Panc1 (cell line): ENCODE measurements at regions of chr9 and their contacts with region 1.

Region 1: DNA sequence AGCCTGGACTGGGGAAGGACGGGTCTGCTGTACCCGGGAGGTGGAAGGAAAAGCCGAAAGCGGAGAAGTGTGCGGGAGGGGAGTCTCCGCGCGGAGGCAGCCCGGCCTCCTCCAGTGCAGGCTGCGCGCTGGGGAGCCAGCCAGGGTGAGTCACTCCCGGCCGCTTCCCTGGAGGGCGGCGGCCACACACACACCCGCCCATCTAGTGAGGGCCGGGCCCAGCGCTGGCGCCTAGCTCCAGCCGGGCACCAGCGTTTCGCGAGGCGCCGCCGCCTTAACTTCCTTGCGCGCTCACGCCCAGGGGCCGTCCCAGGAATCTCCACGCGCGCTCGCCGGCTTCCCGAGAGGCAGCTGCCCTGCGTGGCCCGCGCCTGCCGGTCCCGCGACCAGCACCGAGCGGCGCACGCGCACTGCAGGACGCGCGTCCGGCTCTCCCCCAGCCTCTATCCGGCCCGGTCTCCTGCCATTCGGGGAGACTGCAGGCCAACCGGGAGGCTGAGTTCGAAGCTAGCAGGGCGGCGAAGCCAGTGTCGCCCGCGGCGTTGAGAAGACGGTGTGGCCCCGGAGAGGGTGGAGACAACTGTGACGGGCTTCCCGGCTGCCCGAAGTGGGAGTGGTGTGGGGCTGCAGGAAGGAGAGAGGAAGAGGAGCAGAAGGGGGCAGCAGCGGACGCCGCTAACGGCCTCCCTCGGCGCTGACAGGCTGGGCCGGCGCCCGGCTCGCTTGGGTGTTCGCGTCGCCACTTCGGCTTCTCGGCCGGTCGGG is at the start of gene JAK2:
- DNase-seq: no peak
- ATAC-seq: peak; percentile 96
- H3K4me3 ChIP-seq: peak within 1 kb of the TSS; percentile 57 to 60
- H3K27ac ChIP-seq: peak within 1 kb of the TSS; percentile 61
- H3K4me1 ChIP-seq: peaks cover 3% of the 10 kb centered on the region; the same call in 1 of the 2 replicates
- H3K27me3 ChIP-seq: no peaks in the 10 kb centered on the region
- CTCF ChIP-seq: peak; percentile 50
- total RNA-seq, gene JAK2: 2.3 TPM

Region 2: DNA sequence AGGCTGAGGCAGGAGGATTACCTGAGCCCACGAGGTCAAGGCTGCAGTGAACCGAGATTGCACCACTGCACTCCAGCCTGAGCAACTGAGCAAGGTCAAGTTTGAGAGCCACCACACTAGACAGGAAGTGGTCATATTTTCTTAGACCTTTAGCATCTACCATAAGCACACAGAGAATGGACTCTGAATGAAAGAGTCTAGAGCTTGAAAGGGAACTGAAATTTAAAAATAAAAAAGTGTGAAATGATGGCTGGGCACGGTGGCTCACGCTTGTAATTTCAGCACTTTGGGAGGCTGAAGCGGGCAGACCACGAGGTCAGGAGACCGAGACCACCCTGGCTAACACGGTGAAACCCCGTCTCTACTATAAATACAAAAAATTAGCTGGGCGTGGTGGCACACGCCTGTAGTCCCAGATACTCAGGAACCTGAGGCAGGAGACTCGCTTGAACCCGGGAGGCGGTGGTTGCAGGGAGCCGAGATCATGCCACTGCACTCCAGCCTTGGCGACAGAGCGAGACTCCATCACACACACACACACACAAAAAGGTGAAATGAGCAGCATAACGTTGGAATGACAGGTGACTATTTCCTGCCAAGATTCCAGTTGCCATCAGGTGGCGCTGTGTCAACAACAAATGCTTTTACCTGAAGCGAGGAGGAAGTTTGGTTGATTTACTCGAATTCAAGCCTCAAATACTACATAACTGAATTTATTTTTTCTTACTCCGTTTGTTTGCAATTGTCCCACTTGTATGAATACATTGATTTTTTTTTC is 222.5 kb before region 1 on chr9:
- CTCF ChIA-PET with region 1: no interaction called
- POLR2A ChIA-PET with region 1: no interaction called
- in situ Hi-C with region 1: no loop called
- intact Hi-C with region 1: loop called (anchors 5 kb)
- DNase-seq: peak; percentile 32
- ATAC-seq: no peak
- H3K4me3 ChIP-seq: no peak overlapping the region
- H3K27ac ChIP-seq: no peak overlapping the region
- H3K4me1 ChIP-seq: no peaks in the 10 kb centered on the region
- H3K27me3 ChIP-seq: no peaks in the 10 kb centered on the region
- CTCF ChIP-seq: peak; percentile 64

Region 3: GRCh38 chr9:4929890-4930289 is 54.9 kb before region 1 on chr9:
- CTCF ChIA-PET with region 1: no interaction called
- POLR2A ChIA-PET with region 1: no interaction called
- in situ Hi-C with region 1: no loop called
- intact Hi-C with region 1: loop called (anchors 2 kb)
- DNase-seq: no peak
- ATAC-seq: no peak
- H3K4me3 ChIP-seq: no peak overlapping the region
- H3K27ac ChIP-seq: no peak overlapping the region
- H3K4me1 ChIP-seq: no peaks in the 10 kb centered on the region
- H3K27me3 ChIP-seq: no peaks in the 10 kb centered on the region
- CTCF ChIP-seq: no peak

Region 4: GRCh38 chr9:5052838-5053237 is 68.0 kb after region 1 on chr9:
- CTCF ChIA-PET with region 1: no interaction called
- POLR2A ChIA-PET with region 1: no interaction called
- in situ Hi-C with region 1: no loop called
- intact Hi-C with region 1: no loop called
- DNase-seq: no peak
- ATAC-seq: no peak
- H3K4me3 ChIP-seq: no peak overlapping the region
- H3K27ac ChIP-seq: no peak overlapping the region
- H3K4me1 ChIP-seq: no peaks in the 10 kb centered on the region
- H3K27me3 ChIP-seq: no peaks in the 10 kb centered on the region
- CTCF ChIP-seq: no peak